Right cardiac atrium (tissue), 5 donors: ENCODE measurements at regions of chr4 and their contacts with region 1.

Region 1: GRCh38 chr4:122758033-122758432 is 25.5 kb downstream of the BBS12 start:
- DNase-seq: no peak
- ATAC-seq: peak in 1 of 2 donors; percentile 43
- H3K4me3 ChIP-seq: peak overlapping the region; percentile 13
- H3K27ac ChIP-seq: no peak overlapping the region
- H3K4me1 ChIP-seq: no peaks in the 10 kb centered on the region
- H3K27me3 ChIP-seq: no peaks in the 10 kb centered on the region

Region 2: GRCh38 chr4:122914292-122914904 is 156.4 kb after region 1 on chr4:
- intact Hi-C with region 1: loop called in 2 of 4 experiments (anchors 5 kb)
- DNase-seq: no peak
- ATAC-seq: peak in 1 of 2 donors; percentile 62
- H3K4me3 ChIP-seq: no peak overlapping the region
- H3K27ac ChIP-seq: no peak overlapping the region
- H3K4me1 ChIP-seq: no peaks in the 10 kb centered on the region
- H3K27me3 ChIP-seq: no peaks in the 10 kb centered on the region

Region 3: GRCh38 chr4:122922877-122923511 is 165.0 kb after region 1 on chr4:
- intact Hi-C with region 1: loop called in 3 of 4 experiments (anchors 5 to 10 kb)
- DNase-seq: peak; percentile 85 to 92 (median 92)
- ATAC-seq: peak; percentile 99
- H3K4me3 ChIP-seq: peak overlapping the region; percentile 98
- H3K27ac ChIP-seq: peak overlapping the region; percentile 87
- H3K4me1 ChIP-seq: peaks cover 2% of the 10 kb centered on the region
- H3K27me3 ChIP-seq: no peaks in the 10 kb centered on the region

Region 4: DNA sequence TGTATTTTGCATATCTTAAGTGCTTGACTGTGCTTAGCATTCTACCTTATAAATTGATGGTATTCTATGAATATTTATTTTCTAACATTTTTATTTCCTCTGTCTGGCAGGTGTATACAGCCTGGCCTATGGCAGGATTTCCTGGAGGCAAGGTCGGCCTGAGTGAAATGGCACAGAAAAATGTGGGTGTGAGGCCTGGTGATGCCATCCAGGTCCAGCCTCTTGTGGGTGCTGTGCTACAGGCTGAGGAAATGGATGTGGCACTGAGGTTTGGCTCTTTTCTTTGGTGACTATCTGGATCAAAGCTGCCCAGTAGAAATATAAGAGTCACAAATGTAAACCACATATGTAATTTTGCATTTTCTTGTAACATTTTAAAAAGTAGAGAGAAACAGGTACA is 170.9 kb after region 1 on chr4:
- intact Hi-C with region 1: loop called in 3 of 4 experiments (anchors 5 to 10 kb)
- DNase-seq: no peak
- ATAC-seq: no peak
- H3K4me3 ChIP-seq: no peak overlapping the region
- H3K27ac ChIP-seq: no peak overlapping the region
- H3K4me1 ChIP-seq: no peaks in the 10 kb centered on the region
- H3K27me3 ChIP-seq: no peaks in the 10 kb centered on the region